Activated CD4-positive, alpha-beta memory T cell treated with anti-CD3 and anti-CD28 coated beads, Interleukin-2, amount 10 ng/mL, durations not matched to agents 7 days and 5 days (primary cell): ENCODE measurements at regions of chr17 and their contacts with region 1.

Region 1: GRCh38 chr17:1516388-1517161 is at the start of gene INPP5K:
- DNase-seq: peak; percentile 99
- H3K4me3 Mint-ChIP-seq: peak within 1 kb of the TSS; percentile 86
- H3K27ac Mint-ChIP-seq: peak within 1 kb of the TSS; percentile 85
- H3K4me1 Mint-ChIP-seq: peaks cover 35% of the 10 kb centered on the region
- H3K27me3 Mint-ChIP-seq: no peaks in the 10 kb centered on the region
- total RNA-seq, gene INPP5K: 52.4 to 58.1 TPM

Region 2: DNA sequence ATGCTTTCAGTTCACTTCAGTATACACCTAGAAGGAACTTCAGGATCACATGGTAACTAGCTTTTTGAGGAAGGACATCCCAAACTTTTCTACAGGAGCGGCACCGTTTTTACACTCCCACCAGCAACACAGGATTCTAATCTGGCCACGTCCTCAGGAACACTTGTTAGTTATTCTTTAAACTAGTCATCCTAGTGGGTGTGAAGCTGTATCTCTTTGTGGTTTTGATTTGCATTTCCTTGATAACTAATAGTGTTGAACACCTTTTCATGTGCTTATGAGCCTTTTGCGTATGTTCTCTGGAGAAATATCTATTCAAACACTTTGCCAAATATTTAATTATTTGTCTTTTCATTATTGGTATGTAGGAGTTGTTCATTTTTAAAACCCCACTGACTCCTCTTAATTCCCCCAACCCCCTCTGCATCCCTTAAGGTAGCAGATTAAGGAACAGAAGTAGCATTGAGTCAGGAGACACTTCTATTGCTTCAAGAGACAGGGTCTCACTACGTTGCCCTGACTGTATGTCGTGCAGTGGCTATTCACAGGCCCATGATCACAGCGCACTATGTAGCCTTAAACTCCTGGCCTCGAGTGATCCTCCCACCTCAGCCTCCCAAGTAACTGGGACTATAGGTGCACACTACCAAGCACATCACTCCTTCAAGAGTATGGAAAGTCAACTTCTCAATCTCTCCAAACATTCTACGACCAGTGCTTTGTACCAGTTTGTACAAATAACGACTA is 142.0 kb before region 1 on chr17:
- CTCF ChIA-PET with region 1: interaction called, 6 read pairs
- POLR2A ChIA-PET with region 1: interaction called, 13 read pairs
- DNase-seq: no peak
- H3K4me3 Mint-ChIP-seq: no peak overlapping the region
- H3K27ac Mint-ChIP-seq: peak overlapping the region; percentile 83
- H3K4me1 Mint-ChIP-seq: peaks cover 69% of the 10 kb centered on the region
- H3K27me3 Mint-ChIP-seq: no peaks in the 10 kb centered on the region

Region 3: DNA sequence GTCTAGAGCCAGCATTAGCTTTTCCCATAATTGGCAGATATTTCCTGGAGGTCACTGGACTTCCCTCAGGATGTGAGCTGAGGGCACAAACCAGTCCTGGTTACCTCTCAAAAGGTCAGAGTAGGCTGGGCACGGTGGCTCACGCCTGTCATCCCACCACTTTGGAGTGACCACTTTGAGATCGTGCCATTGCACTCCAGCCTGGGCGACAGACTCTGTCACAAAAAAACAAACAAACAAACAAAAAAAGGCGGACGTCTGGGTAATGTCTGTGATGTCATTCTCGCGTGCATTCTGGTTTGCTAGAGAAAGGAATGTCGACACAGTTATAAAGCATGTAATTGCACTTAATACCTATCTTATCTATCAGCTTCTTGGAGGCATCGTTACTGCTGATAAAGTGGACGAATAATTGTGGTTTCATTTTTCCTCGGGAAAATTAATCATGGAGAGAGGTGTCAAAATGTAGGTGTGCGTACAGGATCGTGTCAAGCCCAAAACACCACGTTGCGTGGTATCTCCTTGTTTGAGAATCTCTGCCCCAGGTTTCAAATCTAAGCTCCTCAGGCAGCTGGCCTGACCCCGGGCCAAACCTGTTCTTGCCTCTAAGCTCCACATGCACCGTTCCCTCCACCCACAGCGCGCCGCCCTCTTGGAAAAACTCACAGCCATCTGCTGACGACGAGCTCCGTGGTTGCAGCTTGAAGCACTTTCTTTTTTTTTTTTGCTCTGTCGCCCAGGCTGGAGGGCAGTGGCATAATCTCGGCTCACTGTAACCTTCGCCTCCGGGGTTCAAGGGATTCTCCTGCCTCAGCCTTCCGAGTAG is 54.1 kb before region 1 on chr17:
- CTCF ChIA-PET with region 1: interaction called, 4 read pairs
- POLR2A ChIA-PET with region 1: interaction called, 11 read pairs
- DNase-seq: no peak
- H3K4me3 Mint-ChIP-seq: peak overlapping the region; percentile 36
- H3K27ac Mint-ChIP-seq: no peak overlapping the region
- H3K4me1 Mint-ChIP-seq: peaks cover 30% of the 10 kb centered on the region
- H3K27me3 Mint-ChIP-seq: peaks cover 27% of the 10 kb centered on the region

Region 4: DNA sequence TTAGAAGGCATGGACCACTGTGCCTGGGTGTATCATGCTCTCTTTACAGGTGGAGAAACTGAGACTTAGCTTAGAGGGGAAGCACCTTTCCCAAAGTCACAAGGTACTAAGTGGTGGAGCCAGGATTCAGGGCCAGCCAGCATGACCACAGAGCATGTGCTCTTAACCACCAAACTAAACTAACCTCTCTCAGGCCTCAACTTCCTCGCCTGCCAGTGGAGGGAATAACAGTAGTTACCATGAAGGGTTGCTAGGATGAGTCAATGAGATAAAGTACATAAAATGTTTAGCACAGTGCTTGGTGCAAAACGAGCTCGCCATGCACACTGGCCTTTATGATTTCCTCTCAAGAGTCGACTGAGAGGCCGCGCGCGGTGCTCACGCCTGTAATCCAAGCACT is 17.7 kb before region 1 on chr17:
- CTCF ChIA-PET with region 1: no interaction called
- POLR2A ChIA-PET with region 1: interaction called, 15 read pairs
- DNase-seq: no peak
- H3K4me3 Mint-ChIP-seq: no peak overlapping the region
- H3K27ac Mint-ChIP-seq: no peak overlapping the region
- H3K4me1 Mint-ChIP-seq: peaks cover 6% of the 10 kb centered on the region
- H3K27me3 Mint-ChIP-seq: no peaks in the 10 kb centered on the region

Region 5: GRCh38 chr17:1628856-1629646 is 112.5 kb after region 1 on chr17:
- CTCF ChIA-PET with region 1: interaction called, 10 read pairs
- POLR2A ChIA-PET with region 1: interaction called, 4 read pairs
- DNase-seq: peak; percentile 89
- H3K4me3 Mint-ChIP-seq: peak overlapping the region; percentile 83
- H3K27ac Mint-ChIP-seq: peak overlapping the region; percentile 53
- H3K4me1 Mint-ChIP-seq: peaks cover 17% of the 10 kb centered on the region
- H3K27me3 Mint-ChIP-seq: peaks cover 40% of the 10 kb centered on the region